B cell (primary cell): ENCODE measurements at regions of chr13 and their contacts with region 1.

Region 1: GRCh38 chr13:35157143-35157755 is 215.2 kb downstream of the NBEA start:
- DNase-seq: peak; percentile 48
- ATAC-seq: peak; percentile 36
- H3K4me3 ChIP-seq: no peak overlapping the region
- H3K4me3 Mint-ChIP-seq: no peak overlapping the region
- H3K27ac ChIP-seq: no peak overlapping the region
- H3K27ac Mint-ChIP-seq: no peak overlapping the region
- H3K4me1 ChIP-seq: peaks cover under 1 to 1% of the 10 kb centered on the region in 2 donors
- H3K4me1 Mint-ChIP-seq: peaks cover 2% of the 10 kb centered on the region
- H3K27me3 ChIP-seq: no peaks in the 10 kb centered on the region
- H3K27me3 Mint-ChIP-seq: no peaks in the 10 kb centered on the region
- CTCF ChIP-seq: peak; percentile 73

Region 2: DNA sequence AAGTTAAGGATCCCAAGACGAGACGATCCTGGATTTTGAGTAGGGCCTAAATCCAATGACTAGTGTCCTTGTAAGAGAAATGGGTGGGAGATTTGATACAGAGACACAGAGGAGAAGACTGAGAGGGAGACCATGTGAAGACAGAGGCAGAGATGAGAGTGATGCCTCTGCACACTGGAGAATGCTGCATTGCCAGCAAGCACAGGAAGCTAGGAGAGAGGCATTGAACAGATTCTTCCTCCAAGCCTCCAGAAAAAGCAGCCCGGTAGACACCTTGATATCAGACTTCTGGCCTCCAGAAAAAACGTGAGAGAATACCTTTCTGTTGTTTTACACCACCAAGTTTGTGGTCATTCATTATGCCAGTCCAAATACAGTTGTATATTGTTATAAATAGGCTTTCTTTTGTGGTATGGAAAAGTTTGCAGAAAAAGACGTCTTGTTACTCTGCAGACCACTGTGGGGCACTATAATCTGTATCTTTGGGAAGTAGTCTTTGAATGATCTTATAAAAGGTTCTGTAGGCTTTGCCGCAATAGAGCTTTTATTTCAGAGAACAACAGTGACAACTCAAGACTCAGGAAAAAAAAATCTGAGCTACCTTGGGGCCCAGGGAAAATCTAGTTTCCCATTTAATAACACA is 1357.2 kb before region 1 on chr13:
- CTCF ChIA-PET with region 1: interaction called, 10 read pairs
- POLR2A ChIA-PET with region 1: no interaction called
- intact Hi-C with region 1: loop called (anchors 5 kb)
- DNase-seq: no peak
- ATAC-seq: no peak
- H3K4me3 ChIP-seq: no peak overlapping the region
- H3K4me3 Mint-ChIP-seq: no peak overlapping the region
- H3K27ac ChIP-seq: no peak overlapping the region
- H3K27ac Mint-ChIP-seq: no peak overlapping the region
- H3K4me1 ChIP-seq: no peaks in the 10 kb centered on the region
- H3K4me1 Mint-ChIP-seq: peaks cover 4% of the 10 kb centered on the region
- H3K27me3 ChIP-seq: peaks cover 0 to 8% (median 0%) of the 10 kb centered on the region in 4 experiments
- H3K27me3 Mint-ChIP-seq: peaks cover 17% of the 10 kb centered on the region
- CTCF ChIP-seq: no peak

Region 3: GRCh38 chr13:34793301-34793700 is 363.9 kb before region 1 on chr13:
- CTCF ChIA-PET with region 1: no interaction called
- POLR2A ChIA-PET with region 1: no interaction called
- intact Hi-C with region 1: no loop called
- DNase-seq: no peak
- ATAC-seq: no peak
- H3K4me3 ChIP-seq: no peak overlapping the region
- H3K4me3 Mint-ChIP-seq: no peak overlapping the region
- H3K27ac ChIP-seq: no peak overlapping the region
- H3K27ac Mint-ChIP-seq: no peak overlapping the region
- H3K4me1 ChIP-seq: no peaks in the 10 kb centered on the region
- H3K4me1 Mint-ChIP-seq: no peaks in the 10 kb centered on the region
- H3K27me3 ChIP-seq: no peaks in the 10 kb centered on the region
- H3K27me3 Mint-ChIP-seq: no peaks in the 10 kb centered on the region
- CTCF ChIP-seq: no peak

Region 4: DNA sequence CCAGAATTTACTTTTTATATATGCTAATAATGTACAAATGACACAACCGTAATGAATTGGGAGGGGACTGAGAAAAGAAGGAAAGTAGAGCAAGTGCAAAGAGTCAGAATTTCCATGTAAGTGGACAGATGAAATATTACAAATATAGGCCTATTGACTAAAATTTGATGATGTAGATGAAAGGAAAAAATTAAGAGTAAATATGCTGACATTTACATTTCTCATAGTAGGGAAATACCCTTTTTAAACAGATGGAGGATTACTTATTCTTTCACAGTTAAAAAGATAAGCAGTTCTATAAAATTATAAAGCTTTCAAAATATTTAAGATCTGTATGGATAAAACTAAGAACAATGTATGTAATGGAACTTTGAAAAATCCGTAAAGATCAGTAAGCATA is 29.8 kb before region 1 on chr13:
- CTCF ChIA-PET with region 1: no interaction called
- POLR2A ChIA-PET with region 1: no interaction called
- intact Hi-C with region 1: loop called (anchors 1 kb)
- DNase-seq: no peak
- ATAC-seq: no peak
- H3K4me3 ChIP-seq: no peak overlapping the region
- H3K4me3 Mint-ChIP-seq: no peak overlapping the region
- H3K27ac ChIP-seq: no peak overlapping the region
- H3K27ac Mint-ChIP-seq: no peak overlapping the region
- H3K4me1 ChIP-seq: no peaks in the 10 kb centered on the region
- H3K4me1 Mint-ChIP-seq: no peaks in the 10 kb centered on the region
- H3K27me3 ChIP-seq: no peaks in the 10 kb centered on the region
- H3K27me3 Mint-ChIP-seq: no peaks in the 10 kb centered on the region
- CTCF ChIP-seq: no peak

Region 5: DNA sequence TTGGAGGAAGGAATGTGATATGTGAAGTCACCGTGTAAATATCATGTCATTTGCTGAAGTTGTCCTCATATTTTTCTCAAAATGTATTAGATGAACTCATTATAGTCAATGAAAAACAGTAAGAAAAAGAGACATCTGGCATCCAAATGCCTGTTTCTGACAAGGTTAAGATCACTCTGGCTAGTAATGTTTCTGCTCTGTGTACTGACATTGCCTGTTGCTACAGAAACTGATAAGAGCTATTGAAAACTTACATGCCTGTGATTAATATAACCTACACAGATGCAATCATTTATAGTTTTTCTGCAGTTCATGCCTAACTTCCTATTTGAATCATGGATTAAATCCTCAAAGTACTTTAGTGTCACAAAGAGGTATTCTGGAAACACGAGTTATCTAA is 34.6 kb after region 1 on chr13:
- CTCF ChIA-PET with region 1: no interaction called
- POLR2A ChIA-PET with region 1: no interaction called
- intact Hi-C with region 1: no loop called
- DNase-seq: no peak
- ATAC-seq: no peak
- H3K4me3 ChIP-seq: no peak overlapping the region
- H3K4me3 Mint-ChIP-seq: no peak overlapping the region
- H3K27ac ChIP-seq: no peak overlapping the region
- H3K27ac Mint-ChIP-seq: no peak overlapping the region
- H3K4me1 ChIP-seq: no peaks in the 10 kb centered on the region
- H3K4me1 Mint-ChIP-seq: no peaks in the 10 kb centered on the region
- H3K27me3 ChIP-seq: no peaks in the 10 kb centered on the region
- H3K27me3 Mint-ChIP-seq: no peaks in the 10 kb centered on the region
- CTCF ChIP-seq: no peak